ENCODE measurements at regions of chr2 and their contacts with region 1.

Region 1: GRCh38 chr2:229835596-229836283 is 86.1 kb downstream of the TRIP12 start:
- DNase-seq: no peak
- ATAC-seq: no peak
- H3K4me3 ChIP-seq: no peak overlapping the region
- H3K27ac ChIP-seq: no peak overlapping the region
- H3K4me1 ChIP-seq: no peaks in the 10 kb centered on the region; the same call in 1 of the 2 replicates
- H3K27me3 ChIP-seq: no peaks in the 10 kb centered on the region
- CTCF ChIP-seq: no peak
- EP300 ChIP-seq: no peak
- POLR2A ChIP-seq: no peak
- RAD21 ChIP-seq: no peak

Region 2: GRCh38 chr2:229825476-229825875 is 10.3 kb before region 1 on chr2:
- CTCF ChIA-PET with region 1: interaction called, 4 read pairs
- POLR2A ChIA-PET with region 1: no interaction called
- RAD21 ChIA-PET with region 1: interaction called, 4 read pairs
- SMC1A ChIA-PET with region 1: interaction called, 11 read pairs
- in situ Hi-C with region 1: no loop called
- intact Hi-C with region 1: no loop called
- DNase-seq: no peak
- ATAC-seq: no peak
- H3K4me3 ChIP-seq: no peak overlapping the region
- H3K27ac ChIP-seq: no peak overlapping the region
- H3K4me1 ChIP-seq: peaks cover 20% of the 10 kb centered on the region
- H3K27me3 ChIP-seq: no peaks in the 10 kb centered on the region
- CTCF ChIP-seq: 0 out of 6 replicates have a peak, but pooled peaks of 1 of the 3 experiments have one; percentile 9
- EP300 ChIP-seq: no peak
- POLR2A ChIP-seq: no peak
- RAD21 ChIP-seq: no peak

Region 3: DNA sequence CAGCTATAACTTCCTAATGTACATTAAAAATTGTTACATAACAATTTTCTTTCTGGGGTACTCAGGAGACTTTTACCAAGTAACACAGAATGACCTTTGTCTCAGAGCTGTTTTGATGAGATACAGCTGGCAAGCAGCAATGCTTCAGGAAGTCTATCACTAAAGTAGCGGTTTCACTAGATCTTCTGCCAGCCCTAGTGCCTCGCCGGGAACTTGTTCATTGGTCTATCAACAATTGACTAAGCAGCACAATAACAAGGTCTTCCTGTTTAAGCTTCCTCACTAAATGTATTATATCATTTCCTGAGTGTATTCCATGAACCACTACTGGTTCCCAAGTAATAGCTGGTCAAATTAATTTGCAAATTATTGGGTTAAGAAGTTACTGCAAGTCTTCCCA is 16.8 kb after region 1 on chr2:
- CTCF ChIA-PET with region 1: interaction called, 4 read pairs
- POLR2A ChIA-PET with region 1: interaction called, 3 read pairs
- RAD21 ChIA-PET with region 1: interaction called, 3 read pairs
- SMC1A ChIA-PET with region 1: interaction called, 13 read pairs
- in situ Hi-C with region 1: no loop called
- intact Hi-C with region 1: no loop called
- DNase-seq: peak; percentile 42
- ATAC-seq: peak; percentile 84
- H3K4me3 ChIP-seq: no peak overlapping the region
- H3K27ac ChIP-seq: no peak overlapping the region; the same call in 1 of the 2 replicates
- H3K4me1 ChIP-seq: peaks cover 6% of the 10 kb centered on the region; the same call in 1 of the 2 replicates
- H3K27me3 ChIP-seq: no peaks in the 10 kb centered on the region
- CTCF ChIP-seq: no peak
- EP300 ChIP-seq: no peak
- POLR2A ChIP-seq: no peak
- RAD21 ChIP-seq: no peak

Region 4: DNA sequence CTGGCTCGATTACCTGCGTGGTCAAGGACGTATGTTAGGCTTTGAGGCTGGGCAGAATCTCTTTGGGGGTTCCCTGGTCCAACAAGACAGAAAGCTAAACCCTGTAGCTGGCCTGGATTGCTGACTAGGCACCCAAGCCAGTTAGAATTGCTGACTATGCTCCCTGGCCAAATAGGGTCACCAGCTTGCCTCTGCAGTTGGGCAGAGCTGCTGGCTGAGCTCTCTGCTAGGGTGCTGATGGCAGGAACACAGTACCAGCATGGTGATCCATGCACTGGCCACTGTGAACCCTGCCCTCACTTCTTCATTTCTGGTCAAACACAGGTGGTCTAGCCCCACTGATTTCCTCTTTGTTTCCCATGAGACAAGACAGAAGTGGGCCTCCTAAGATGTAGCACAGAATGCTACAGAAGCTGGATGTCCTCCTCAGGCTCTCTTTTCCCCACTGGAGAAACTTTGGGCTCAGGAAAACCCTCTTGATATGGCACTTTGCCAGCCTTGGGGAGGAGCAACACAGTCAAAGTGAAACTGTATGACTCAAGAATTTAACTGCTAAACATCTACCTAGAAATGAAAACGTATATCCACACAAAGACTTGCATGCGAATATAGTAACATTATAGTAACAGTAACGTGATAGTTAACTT is 512.0 kb after region 1 on chr2:
- CTCF ChIA-PET with region 1: no interaction called
- POLR2A ChIA-PET with region 1: no interaction called
- RAD21 ChIA-PET with region 1: no interaction called
- SMC1A ChIA-PET with region 1: no interaction called
- in situ Hi-C with region 1: no loop called
- intact Hi-C with region 1: no loop called
- DNase-seq: peak; percentile 32
- ATAC-seq: peak; percentile 87
- H3K4me3 ChIP-seq: no peak overlapping the region
- H3K27ac ChIP-seq: peak overlapping the region; percentile 27; the same call in 1 of the 2 replicates
- H3K4me1 ChIP-seq: peaks cover 15% of the 10 kb centered on the region
- H3K27me3 ChIP-seq: no peaks in the 10 kb centered on the region
- CTCF ChIP-seq: no peak
- EP300 ChIP-seq: no peak
- POLR2A ChIP-seq: no peak
- RAD21 ChIP-seq: no peak